Activated naive CD4-positive, alpha-beta T cell treated with anti-CD3 and anti-CD28 coated beads for 36 hours (primary cell): ENCODE measurements at regions of chr1 and their contacts with region 1.

Region 1: GRCh38 chr1:108963052-108963686 is at the start of gene CLCC1:
- DNase-seq: peak; percentile 96
- H3K4me3 Mint-ChIP-seq: peak within 1 kb of the TSS; percentile 88
- H3K27ac Mint-ChIP-seq: peak within 1 kb of the TSS; percentile 87
- H3K4me1 Mint-ChIP-seq: peaks cover 26% of the 10 kb centered on the region
- H3K27me3 Mint-ChIP-seq: no peaks in the 10 kb centered on the region
- total RNA-seq, gene CLCC1: 14.3 to 15.2 TPM

Region 2: DNA sequence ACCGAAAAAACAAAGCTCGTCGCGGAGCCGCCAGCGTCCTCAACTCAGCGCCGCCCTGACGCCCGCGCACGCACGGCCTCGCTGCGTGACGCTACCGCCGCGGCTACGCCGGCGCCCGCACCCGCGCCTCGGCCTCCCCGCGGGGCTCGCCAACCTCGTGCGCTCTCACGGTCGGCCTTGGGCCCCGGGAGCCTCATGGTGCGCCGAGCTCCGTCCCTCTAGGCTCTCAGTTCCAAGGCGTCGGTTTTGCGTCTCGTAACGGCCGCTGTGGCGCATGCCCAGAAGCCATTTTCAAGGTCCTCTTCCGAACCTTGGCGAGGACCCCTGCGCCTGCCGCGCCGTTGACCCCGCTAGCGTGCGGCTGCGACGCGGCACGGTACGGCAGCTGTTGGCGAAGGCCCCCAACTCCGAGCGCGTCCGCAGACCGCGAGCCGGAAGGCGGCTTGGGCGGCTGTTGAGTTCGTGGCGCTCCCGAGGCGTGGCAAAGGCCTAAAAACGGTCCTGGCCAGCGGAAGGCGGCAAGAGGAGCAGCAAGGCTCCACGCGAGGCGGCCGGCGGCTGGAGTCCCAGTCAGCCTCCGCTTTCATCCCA is 302.0 kb before region 1 on chr1 and contains the start of gene HENMT1:
- CTCF ChIA-PET with region 1: no interaction called
- intact Hi-C with region 1: loop called (anchors 5 kb)
- DNase-seq: peak; percentile 78
- H3K4me3 Mint-ChIP-seq: peak within 1 kb of the TSS; percentile 84
- H3K27ac Mint-ChIP-seq: peak within 1 kb of the TSS; percentile 94
- H3K4me1 Mint-ChIP-seq: peaks cover 25% of the 10 kb centered on the region
- H3K27me3 Mint-ChIP-seq: no peaks in the 10 kb centered on the region
- total RNA-seq, gene HENMT1: 18.7 to 19.3 TPM

Region 3: DNA sequence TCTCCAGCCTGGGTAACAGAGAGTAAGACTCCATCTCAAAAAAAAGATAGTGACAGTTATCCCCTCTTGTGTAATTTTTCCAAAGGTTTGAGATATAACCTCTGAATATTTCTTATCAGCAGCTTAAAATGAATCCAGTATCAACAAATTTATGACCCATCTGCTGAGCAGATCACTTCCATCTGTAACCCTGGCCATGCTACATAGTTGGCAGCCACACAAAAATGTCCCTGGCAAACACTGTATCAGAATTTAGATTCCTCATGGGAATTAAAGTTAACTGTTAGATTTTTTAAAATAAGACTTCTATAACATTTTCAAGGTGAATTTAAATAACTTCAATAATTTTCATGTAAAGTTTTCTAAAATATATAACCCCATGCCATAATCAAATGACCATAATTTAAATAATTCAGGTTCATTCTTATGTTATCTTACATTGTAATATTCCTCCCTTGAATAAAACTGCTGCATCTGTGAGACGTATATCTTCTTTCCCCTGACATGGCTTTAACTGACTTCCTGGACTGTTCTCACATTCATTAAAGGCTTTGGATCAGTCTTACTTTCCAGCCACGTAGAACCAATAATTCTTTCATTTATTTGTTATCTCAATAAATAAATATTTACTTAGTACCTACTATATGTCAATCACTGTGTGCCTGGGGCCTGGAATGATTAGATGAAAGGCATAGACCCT is 276.4 kb before region 1 on chr1:
- CTCF ChIA-PET with region 1: no interaction called
- intact Hi-C with region 1: no loop called
- DNase-seq: no peak
- H3K4me3 Mint-ChIP-seq: no peak overlapping the region
- H3K27ac Mint-ChIP-seq: no peak overlapping the region
- H3K4me1 Mint-ChIP-seq: peaks cover 15% of the 10 kb centered on the region
- H3K27me3 Mint-ChIP-seq: no peaks in the 10 kb centered on the region

Region 4: DNA sequence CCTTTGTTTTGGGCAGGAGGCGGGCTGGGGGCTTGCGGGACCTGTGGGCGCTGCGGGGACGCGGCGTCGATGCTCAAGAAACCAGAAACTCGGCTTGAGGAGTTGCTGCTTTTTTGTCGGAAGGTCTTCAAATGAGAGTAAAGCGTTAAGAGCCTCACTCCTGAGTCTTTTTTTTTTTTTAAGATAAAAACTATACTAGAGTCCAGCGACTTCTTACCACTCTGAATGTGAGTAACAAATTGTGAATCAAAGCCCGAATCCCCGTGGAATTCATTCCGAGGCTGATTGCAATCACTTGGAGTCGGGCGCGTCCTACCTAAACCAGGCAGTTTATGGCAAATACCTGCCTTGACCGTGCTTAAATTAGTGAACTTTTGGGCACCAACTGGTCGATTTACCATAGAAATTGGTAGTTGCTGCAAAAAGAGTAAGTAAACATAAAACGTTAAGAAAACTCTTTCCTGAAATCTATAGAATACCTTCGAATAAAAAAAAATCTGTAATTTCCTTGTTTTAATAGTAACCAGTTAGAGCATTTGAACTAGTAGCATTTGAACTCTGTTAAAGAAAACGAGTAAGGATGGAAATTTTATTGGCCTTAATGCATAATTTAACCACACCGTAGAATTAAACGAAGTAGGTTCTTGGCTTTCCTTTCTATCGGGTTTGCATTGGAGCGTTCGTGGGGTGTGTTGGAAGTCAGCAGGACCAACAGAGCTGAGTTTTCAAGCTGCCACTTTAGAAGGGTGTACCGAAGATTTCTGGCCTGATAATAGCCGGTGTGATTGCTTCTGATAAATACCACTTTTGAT is 85.6 kb before region 1 on chr1:
- CTCF ChIA-PET with region 1: no interaction called
- intact Hi-C with region 1: loop called (anchors 1 kb)
- DNase-seq: no peak
- H3K4me3 Mint-ChIP-seq: peak overlapping the region; percentile 89
- H3K27ac Mint-ChIP-seq: no peak overlapping the region
- H3K4me1 Mint-ChIP-seq: peaks cover 4% of the 10 kb centered on the region
- H3K27me3 Mint-ChIP-seq: peaks cover 25% of the 10 kb centered on the region

Region 5: DNA sequence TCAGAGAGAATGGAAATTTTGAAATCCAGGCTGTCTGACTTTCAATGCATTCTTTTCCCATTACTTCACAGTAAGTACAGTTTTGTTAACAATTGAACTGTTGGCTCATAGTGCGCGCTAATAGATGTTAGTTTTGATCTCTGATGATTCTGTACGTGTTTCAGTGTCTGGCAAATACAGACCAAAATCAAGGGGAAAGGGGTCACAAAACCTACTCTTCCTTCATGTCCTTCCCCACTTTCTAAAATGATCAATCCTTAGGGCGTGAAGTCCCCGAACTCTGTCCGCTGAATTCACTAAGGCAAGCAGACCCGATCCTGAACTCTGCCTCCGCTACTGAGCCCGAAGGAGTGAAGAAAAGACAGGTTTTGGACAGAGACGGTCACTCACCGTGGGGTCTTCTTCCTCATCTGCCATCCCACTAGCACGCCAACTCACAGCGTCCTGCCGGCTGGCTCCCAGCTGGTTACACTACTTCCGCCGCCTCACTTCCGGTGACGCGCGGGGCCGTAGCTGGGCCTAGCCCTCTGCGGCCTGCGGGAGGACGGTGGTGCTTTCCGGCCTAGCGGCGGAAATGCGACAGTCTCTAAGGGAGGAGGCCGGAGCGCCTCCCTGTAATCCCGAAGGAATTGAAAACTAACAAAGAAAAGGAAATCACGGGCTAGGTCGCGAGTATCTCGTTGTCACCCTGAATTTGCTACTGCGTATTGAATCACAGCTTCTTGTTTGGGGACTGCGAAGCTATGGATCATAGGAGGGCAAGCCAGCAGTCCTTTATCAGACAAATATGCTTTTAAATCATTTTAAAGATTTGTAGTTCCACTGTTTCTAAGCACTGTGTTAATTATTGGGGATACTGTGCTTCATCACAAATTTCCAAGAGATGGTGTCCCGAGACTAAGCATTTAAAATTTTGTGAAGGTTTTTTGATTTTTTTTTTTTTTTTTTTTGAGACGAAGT is 112.6 kb after region 1 on chr1 and contains the start of gene TAF13:
- CTCF ChIA-PET with region 1: no interaction called
- intact Hi-C with region 1: loop called (anchors 1 kb)
- DNase-seq: peak; percentile 90
- H3K4me3 Mint-ChIP-seq: peak within 1 kb of the TSS; percentile 95
- H3K27ac Mint-ChIP-seq: peak within 1 kb of the TSS; percentile 95
- H3K4me1 Mint-ChIP-seq: peaks cover 16% of the 10 kb centered on the region
- H3K27me3 Mint-ChIP-seq: no peaks in the 10 kb centered on the region
- total RNA-seq, gene TAF13: 20.1 to 23.7 TPM

Region 6: DNA sequence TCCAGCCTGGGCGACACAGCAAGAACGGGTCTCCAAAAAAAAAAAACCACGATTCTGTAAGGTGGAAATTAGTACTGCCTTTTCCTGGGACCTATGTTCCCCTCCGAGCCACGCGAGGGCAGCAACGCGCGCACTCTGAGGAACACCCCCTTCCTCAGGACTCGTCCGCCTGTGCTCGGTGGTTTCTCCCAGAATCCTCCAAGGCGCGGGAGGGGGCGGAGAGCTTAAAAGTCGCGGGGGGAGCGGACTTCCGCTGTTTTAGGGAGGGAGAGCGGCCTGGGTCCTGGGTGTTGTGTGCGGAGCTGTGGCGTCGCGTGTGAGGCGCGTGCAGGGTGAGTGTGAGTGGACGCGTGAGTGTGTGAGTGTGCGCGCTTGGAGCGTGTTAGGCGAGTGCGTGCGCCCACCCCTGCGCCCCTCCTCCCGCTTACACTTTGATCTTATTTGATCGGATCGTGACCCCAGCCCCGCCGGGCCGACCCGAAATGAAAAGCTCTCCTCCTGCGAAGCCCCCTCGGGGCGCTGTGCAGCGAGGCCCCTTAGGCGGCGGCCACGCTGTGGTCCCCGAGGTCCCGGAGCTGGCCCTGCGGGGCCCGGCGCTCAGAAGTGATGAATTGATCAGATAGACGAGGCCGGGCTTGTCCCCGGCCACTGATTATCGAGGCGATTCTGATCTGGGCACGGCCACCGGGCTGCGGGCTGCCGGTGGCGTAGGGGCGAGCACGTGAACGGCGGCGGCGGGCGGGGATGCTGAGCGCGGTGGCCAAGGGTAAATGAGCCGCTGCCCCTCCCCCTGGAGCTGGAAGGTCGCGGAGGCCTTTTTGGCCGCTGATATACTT is 137.0 kb after region 1 on chr1:
- CTCF ChIA-PET with region 1: no interaction called
- intact Hi-C with region 1: loop called (anchors 1 kb)
- DNase-seq: peak; percentile 98
- H3K4me3 Mint-ChIP-seq: peak overlapping the region; percentile 99
- H3K27ac Mint-ChIP-seq: peak overlapping the region; percentile 97
- H3K4me1 Mint-ChIP-seq: peaks cover 23% of the 10 kb centered on the region
- H3K27me3 Mint-ChIP-seq: peaks cover 2% of the 10 kb centered on the region

Region 7: GRCh38 chr1:109426278-109427170 is 463.4 kb after region 1 on chr1 and contains the start of gene PSMA5:
- CTCF ChIA-PET with region 1: no interaction called
- intact Hi-C with region 1: loop called (anchors 1 kb)
- DNase-seq: peak; percentile 98
- H3K4me3 Mint-ChIP-seq: peak within 1 kb of the TSS; percentile 94
- H3K27ac Mint-ChIP-seq: peak within 1 kb of the TSS; percentile 97
- H3K4me1 Mint-ChIP-seq: peaks cover 33% of the 10 kb centered on the region
- H3K27me3 Mint-ChIP-seq: no peaks in the 10 kb centered on the region
- total RNA-seq, gene PSMA5: 181 to 202 TPM